Activated CD8-positive, alpha-beta T cell treated with anti-CD3 and anti-CD28 coated beads, Interleukin-2, amount 10 ng/mL, durations not matched to agents 7 days and 5 days (primary cell): ENCODE measurements at regions of chr17 and their contacts with region 1.

Region 1: DNA sequence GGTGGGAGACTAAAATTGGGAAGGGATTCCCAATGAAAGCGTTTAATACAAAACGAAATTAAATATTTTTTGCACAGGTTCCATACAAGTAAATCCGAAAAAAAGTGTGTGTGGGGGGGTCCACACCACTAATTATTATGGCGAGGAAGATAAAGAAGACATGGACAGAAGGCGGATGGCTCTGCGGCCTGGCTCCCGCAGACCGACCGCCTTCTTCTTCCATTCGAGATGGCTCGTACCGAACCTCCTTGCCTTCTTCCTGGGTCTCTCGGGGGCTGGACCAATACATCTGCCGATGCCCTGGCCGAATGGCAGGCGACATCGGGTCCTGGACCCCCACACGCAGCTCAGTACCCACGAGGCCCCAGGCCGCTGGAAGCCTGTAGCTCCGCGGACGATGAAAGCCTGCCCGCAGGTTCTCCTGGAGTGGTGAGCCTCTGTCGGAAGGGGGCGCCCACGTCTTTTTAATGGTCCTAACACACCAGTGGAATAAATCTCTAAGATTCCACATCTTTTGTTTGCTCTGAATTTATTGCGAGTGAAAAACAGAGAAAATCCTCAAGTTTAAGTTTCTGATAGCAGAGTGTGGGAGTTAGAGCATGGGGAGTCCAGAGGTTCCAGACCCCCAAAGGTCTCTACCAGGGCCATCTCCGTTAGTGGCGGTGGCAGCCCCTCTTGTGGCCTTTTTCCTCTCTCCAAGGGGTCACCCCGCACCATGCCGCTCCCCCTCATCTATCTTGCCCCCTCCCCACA is 1.4 kb downstream of the PRAC2 start:
- DNase-seq: peak; percentile 88
- ATAC-seq: peak; percentile 80
- H3K4me3 Mint-ChIP-seq: peak overlapping the region; percentile 45
- H3K27ac Mint-ChIP-seq: no peak overlapping the region
- H3K4me1 Mint-ChIP-seq: peaks cover 42% of the 10 kb centered on the region
- H3K27me3 Mint-ChIP-seq: peaks cover 94% of the 10 kb centered on the region

Region 2: DNA sequence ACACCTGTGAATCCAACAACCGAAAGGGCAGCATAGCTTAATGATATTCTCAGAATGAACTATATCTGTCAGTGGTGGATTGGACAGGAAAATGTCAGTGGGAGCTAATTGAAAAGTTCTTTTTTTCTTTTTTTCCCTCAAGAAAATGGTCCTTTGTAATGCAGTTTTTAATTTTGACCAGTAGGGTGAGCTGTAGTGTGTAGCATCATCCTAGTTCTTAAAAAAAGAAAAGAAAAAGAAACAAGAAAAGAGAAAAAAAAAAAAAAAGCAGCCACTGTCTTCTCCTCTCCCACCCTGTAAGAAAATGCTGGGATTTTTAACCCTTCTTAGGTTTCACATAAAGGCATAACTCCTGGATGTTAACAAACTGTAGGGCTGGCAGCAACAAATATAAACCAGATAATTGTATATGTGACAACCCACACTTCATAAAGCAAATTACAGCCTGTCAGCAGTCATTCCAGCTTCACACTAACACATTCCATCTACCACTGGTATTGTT is 372.5 kb before region 1 on chr17:
- CTCF ChIA-PET with region 1: no interaction called
- POLR2A ChIA-PET with region 1: no interaction called
- DNase-seq: no peak
- ATAC-seq: no peak
- H3K4me3 Mint-ChIP-seq: peak overlapping the region; percentile 10
- H3K27ac Mint-ChIP-seq: no peak overlapping the region
- H3K4me1 Mint-ChIP-seq: peaks cover 14% of the 10 kb centered on the region
- H3K27me3 Mint-ChIP-seq: no peaks in the 10 kb centered on the region

Region 3: DNA sequence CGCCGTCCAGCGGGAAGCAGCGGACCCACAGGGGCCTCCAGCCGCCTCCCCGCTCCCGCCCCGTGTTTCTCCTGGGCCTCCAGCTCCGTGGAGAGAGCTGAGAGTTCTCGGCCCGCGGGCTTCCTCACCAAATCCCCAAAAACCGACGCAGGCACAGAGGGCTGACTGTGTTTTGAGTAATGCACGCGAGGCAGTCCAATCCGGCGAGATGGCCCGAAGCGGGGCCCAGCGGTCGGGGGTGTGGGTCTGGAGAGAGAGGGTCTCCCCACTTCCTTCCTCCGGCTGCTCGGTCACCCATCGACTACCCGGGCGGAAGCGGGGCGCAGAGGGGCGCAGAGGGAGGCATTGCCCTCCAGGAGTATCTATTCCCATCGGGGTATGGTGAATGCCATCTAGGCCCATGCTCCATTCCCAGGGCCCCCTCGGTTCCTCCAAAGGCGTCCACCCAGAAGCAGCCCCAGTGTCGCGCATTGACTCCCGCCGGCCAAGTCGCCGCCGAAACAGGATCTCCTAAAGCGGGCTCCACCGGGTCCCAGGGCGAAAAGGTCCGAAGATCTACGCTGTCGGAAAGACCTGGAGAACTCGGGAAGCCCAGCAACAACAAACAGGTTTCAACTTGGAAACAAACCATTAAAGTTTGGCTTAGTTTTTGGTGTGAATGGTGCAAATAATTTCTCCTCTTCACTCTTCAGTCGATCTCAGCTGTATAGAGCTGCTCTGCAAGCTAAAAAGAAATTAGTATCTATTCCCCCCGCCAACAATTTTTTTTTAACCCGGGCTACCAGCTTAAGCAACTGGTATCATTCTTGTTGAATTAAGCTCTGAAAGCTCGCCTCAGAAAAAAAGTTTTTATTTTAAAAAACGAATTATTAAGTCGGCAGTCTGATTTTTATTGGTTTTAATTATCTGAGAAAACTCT is 23.3 kb after region 1 on chr17:
- CTCF ChIA-PET with region 1: interaction called, 40 read pairs
- POLR2A ChIA-PET with region 1: interaction called, 4 read pairs
- DNase-seq: no peak
- ATAC-seq: no peak
- H3K4me3 Mint-ChIP-seq: no peak overlapping the region
- H3K27ac Mint-ChIP-seq: no peak overlapping the region
- H3K4me1 Mint-ChIP-seq: peaks cover 4% of the 10 kb centered on the region
- H3K27me3 Mint-ChIP-seq: peaks cover 93% of the 10 kb centered on the region

Region 4: GRCh38 chr17:48791128-48792032 is 67.0 kb after region 1 on chr17:
- CTCF ChIA-PET with region 1: interaction called, 44 read pairs
- POLR2A ChIA-PET with region 1: no interaction called
- DNase-seq: peak; percentile 45
- ATAC-seq: peak; percentile 74
- H3K4me3 Mint-ChIP-seq: no peak overlapping the region
- H3K27ac Mint-ChIP-seq: no peak overlapping the region
- H3K4me1 Mint-ChIP-seq: peaks cover 18% of the 10 kb centered on the region
- H3K27me3 Mint-ChIP-seq: peaks cover 29% of the 10 kb centered on the region